ENCODE measurements at regions of chr9 and their contacts with region 1.

Region 1: DNA sequence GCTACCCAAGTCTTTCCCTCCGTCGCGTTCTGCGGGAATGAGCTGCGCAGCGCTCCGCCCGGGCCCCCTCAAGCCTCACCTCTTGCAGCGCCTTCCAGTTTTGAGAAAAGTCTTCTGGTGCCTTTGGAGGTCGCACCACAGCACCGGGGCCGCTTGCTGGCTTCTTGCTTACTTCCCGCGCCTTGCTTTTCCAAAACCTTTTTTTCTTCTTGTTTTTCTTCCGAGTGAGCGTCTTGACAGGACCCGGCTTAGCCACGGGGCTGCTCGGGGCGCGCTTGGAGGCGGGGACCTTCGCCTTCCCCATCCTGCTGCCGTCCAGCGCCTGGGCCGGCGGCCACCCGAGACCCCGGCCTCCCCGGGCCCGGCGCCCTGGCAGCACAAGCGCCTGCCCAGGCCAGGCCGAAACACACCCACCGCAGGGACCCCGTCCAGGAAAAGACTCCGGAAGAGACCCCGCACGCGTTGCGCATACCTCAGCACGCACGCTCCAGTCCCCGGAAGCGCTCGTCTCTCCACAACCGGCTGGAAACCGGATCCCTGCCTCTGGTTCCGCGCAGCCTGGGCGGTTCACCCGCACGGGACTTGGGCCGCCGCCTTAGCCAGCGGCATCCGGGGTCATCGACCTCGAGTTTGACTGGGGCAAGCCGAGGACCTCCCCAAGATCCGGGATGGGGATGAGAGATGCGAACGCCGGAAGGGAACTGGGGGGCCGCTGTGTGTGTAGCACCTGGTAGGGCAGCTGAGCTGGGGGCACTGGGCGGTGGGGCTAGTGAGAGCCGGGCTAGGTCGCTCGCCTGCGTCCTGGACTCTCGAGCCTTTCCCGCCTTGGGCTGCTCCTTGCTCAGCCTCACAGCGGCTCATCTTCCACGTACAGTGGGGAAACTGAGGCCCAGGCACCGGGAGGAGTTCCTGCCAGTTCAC is at the start of gene REXO4:
- DNase-seq: peak; percentile 94
- H3K4me3 ChIP-seq: peak within 1 kb of the TSS; percentile 86 to 94
- H3K27ac ChIP-seq: peak within 1 kb of the TSS; percentile 81 to 88
- H3K4me1 ChIP-seq: peaks cover 4 to 10% of the 10 kb centered on the region in 2 experiments; a peak in 2 of 4 replicates
- H3K27me3 ChIP-seq: no peaks in the 10 kb centered on the region
- CTCF ChIP-seq: no peak
- EP300 ChIP-seq: no peak
- RAD21 ChIP-seq: no peak
- polyA plus RNA-seq, gene REXO4: 34.2 and 37.3 TPM in 2 replicates

Region 2: DNA sequence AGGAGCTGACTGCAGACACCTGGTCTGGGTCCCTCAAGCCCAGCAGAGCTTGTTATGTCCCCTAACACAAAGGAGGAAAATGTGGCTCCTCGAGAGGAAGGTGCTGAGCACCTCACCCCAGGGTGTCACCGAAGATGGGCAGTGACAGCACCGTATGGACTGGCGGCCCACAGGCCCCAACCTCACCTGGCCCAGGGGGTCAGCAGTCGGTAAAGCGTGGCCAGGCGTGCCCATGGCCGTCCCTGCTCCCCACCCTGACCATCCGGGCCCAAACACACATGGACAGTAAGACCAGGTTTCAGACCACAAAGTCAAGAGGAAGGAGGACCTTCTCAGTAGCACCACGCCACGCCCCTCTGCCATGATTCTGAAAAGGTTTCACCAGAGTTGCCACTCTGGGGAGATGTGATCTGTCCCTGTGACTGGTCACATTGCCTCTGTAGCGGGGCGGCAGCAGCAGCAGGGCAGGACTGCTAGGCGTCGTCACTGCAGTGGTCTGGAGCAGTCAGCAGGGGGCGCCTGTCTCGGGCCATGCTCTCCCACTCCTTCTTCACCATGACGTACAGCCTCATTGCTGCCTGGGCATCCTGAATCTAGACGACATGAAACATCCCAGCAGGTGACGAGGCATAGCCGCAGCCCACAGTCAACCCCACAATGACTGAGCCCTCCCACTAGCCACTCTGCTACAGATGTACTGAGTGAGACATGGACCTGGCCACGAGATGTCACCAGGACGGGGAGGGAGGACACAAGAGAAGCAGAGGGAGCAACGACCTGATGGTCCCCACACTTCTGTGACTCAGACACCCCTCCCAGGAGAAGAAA is 11.1 kb before region 1 on chr9:
- CTCF ChIA-PET with region 1: interaction called, 14 read pairs
- POLR2A ChIA-PET with region 1: no interaction called
- DNase-seq: peak; percentile 91
- H3K4me3 ChIP-seq: peak overlapping the region in 1 of 2 experiments; percentile 33; a peak in 1 of 4 replicates
- H3K27ac ChIP-seq: no peak overlapping the region
- H3K4me1 ChIP-seq: no peaks in the 10 kb centered on the region
- H3K27me3 ChIP-seq: no peaks in the 10 kb centered on the region
- CTCF ChIP-seq: peak; percentile 89
- EP300 ChIP-seq: no peak
- RAD21 ChIP-seq: peak; percentile 72